Activated T-helper 1 cell treated with anti-CD3 and anti-CD28 coated beads, Interleukin-12 subunit alpha, Interleukin-12 subunit beta, Interleukin-2, Interleukin-4 antibody, amounts not matched to agents 30 ng/mL and 10 ng/mL and 1 ng/mL, durations not matched to agents 14 hours and 24 hours and 36 hours (primary cell): ENCODE measurements at regions of chr2 and their contacts with region 1.

Region 1: DNA sequence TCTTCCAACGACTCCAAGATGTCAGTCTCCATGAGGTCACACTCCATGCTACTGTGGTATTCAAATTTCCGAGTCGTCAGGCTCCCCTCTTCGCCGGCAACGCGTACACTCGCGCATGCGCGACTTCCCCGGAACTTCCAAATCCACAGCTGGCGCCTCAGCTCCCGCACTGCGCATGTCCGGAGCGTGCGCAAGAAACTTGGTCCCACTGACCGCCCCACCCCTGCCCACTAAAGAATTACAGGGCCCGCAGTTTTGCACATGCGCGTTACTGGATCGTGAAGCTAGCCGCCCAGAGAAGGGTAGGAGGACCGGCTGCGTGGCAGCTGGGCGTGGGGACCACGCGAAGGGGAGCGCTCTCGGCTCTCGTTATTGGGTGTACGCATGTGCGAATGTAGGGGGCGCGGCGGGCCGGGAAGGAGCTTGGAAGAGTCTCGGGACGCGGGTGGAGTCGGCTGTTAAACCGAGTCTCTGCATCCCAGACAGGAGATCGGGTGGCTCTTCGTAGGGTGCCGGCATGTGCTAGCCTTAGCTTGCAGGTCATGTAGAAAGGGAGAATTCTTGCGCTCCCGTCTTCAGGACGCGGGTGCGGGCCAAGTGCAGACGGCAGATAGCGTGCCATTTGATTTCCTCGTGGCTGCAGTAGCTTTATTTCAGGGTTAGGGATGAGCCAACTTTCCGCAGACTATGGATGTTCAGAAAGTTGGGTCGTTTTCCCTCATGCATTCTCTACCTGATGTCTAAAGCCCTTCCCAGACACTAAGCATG is at the start of gene FAM98A:
- DNase-seq: peak; percentile 98
- H3K4me3 Mint-ChIP-seq: peak within 1 kb of the TSS; percentile 90
- H3K27ac Mint-ChIP-seq: peak within 1 kb of the TSS; percentile 94
- H3K4me1 Mint-ChIP-seq: peaks cover 35% of the 10 kb centered on the region
- H3K27me3 Mint-ChIP-seq: no peaks in the 10 kb centered on the region
- total RNA-seq, gene FAM98A: 58.1 and 59.8 TPM in 2 replicates

Region 2: GRCh38 chr2:32168513-32168912 is 1430.8 kb before region 1 on chr2:
- intact Hi-C with region 1: loop called (anchors 1 kb)
- DNase-seq: no peak
- H3K4me3 Mint-ChIP-seq: no peak overlapping the region
- H3K27ac Mint-ChIP-seq: no peak overlapping the region
- H3K4me1 Mint-ChIP-seq: peaks cover 44% of the 10 kb centered on the region
- H3K27me3 Mint-ChIP-seq: no peaks in the 10 kb centered on the region

Region 3: DNA sequence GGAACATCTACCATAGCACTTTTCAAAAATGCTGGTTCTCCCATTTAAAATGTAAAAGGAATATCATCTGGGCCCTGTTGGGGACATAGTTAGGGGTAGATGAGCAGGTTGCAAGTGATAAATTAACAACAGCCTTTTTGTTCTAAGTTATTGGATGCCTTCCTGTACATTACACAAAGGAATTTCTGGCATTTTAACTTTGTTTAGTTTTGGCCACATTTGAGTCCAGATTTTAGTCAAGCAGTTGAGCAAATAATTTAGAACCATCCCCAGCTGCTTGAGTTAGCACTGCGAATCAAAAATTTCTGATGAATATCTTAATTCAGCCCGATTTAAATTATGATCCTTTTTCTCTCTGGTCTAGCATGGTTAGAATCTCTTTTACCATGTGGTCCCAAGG is 847.2 kb before region 1 on chr2:
- intact Hi-C with region 1: loop called (anchors 10 kb)
- DNase-seq: no peak
- H3K4me3 Mint-ChIP-seq: no peak overlapping the region
- H3K27ac Mint-ChIP-seq: no peak overlapping the region
- H3K4me1 Mint-ChIP-seq: peaks cover 17% of the 10 kb centered on the region
- H3K27me3 Mint-ChIP-seq: no peaks in the 10 kb centered on the region

Region 4: GRCh38 chr2:33321236-33321771 is 278.1 kb before region 1 on chr2:
- intact Hi-C with region 1: loop called (anchors 1 kb)
- DNase-seq: peak; percentile 11
- H3K4me3 Mint-ChIP-seq: peak overlapping the region; percentile 41
- H3K27ac Mint-ChIP-seq: peak overlapping the region; percentile 75
- H3K4me1 Mint-ChIP-seq: peaks cover 25% of the 10 kb centered on the region
- H3K27me3 Mint-ChIP-seq: peaks cover 3% of the 10 kb centered on the region

Region 5: DNA sequence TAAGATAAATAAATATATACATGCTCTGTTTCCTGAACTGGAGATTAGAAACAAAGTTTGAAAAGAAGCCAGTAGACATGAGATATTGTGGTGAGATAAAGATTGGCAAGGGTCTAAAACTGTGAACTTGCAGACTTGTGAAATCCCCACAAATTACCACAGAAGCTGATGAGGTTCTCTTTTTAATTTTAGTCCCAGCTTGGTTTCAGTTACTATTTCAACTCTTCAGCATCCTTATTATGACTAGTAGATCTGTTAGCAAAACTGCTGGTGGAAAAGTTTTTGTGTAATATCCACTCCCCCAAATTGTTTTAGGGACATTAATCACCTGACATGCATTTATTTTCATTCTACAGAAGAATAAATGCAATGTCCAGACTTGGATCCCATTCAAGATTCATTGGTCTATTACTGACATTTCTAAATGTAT is 102.1 kb before region 1 on chr2:
- intact Hi-C with region 1: loop called (anchors 1 kb)
- DNase-seq: no peak
- H3K4me3 Mint-ChIP-seq: peak overlapping the region; percentile 23
- H3K27ac Mint-ChIP-seq: peak overlapping the region; percentile 49
- H3K4me1 Mint-ChIP-seq: peaks cover 50% of the 10 kb centered on the region
- H3K27me3 Mint-ChIP-seq: peaks cover 2% of the 10 kb centered on the region